B cell (primary cell): ENCODE measurements at regions of chr15 and their contacts with region 1.

Region 1: GRCh38 chr15:32844118-32844711 is 126.4 kb downstream of the GREM1 start:
- DNase-seq: peak; percentile 42
- ATAC-seq: peak; percentile 24
- H3K4me3 ChIP-seq: no peak overlapping the region
- H3K4me3 Mint-ChIP-seq: no peak overlapping the region
- H3K27ac ChIP-seq: no peak overlapping the region
- H3K27ac Mint-ChIP-seq: no peak overlapping the region
- H3K4me1 ChIP-seq: peaks cover 0 to 7% of the 10 kb centered on the region in 2 donors
- H3K4me1 Mint-ChIP-seq: peaks cover 10% of the 10 kb centered on the region
- H3K27me3 ChIP-seq: no peaks in the 10 kb centered on the region
- H3K27me3 Mint-ChIP-seq: peaks cover 14% of the 10 kb centered on the region
- CTCF ChIP-seq: peak; percentile 81

Region 2: GRCh38 chr15:32657198-32657883 is 186.9 kb before region 1 on chr15:
- CTCF ChIA-PET with region 1: interaction called, 28 read pairs
- POLR2A ChIA-PET with region 1: no interaction called
- intact Hi-C with region 1: loop called (anchors 10 kb)
- DNase-seq: no peak
- ATAC-seq: no peak
- H3K4me3 ChIP-seq: no peak overlapping the region
- H3K4me3 Mint-ChIP-seq: no peak overlapping the region
- H3K27ac ChIP-seq: no peak overlapping the region
- H3K27ac Mint-ChIP-seq: no peak overlapping the region
- H3K4me1 ChIP-seq: no peaks in the 10 kb centered on the region
- H3K4me1 Mint-ChIP-seq: peaks cover 3% of the 10 kb centered on the region
- H3K27me3 ChIP-seq: no peaks in the 10 kb centered on the region
- H3K27me3 Mint-ChIP-seq: no peaks in the 10 kb centered on the region
- CTCF ChIP-seq: no peak

Region 3: DNA sequence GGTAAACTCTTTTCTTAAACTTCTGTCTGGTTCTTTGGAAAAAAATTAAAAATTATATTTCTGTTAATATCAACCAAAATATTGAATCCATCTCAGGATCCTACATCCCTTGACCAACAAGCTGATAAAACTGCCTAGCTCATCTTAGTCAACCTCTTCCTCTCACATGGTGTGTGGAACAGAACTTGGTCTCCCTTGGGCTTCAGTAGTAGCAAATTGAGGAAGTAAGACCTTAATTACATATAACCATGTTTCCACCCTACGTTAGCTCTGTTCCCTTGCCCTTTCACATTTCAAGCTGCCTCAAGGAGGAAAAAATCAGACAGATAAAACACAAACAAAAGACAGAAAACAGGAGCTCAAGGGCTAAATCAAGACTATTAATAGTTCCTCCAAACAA is 10.1 kb before region 1 on chr15:
- CTCF ChIA-PET with region 1: interaction called, 62 read pairs
- POLR2A ChIA-PET with region 1: no interaction called
- intact Hi-C with region 1: no loop called
- DNase-seq: peak; percentile 63
- ATAC-seq: peak; percentile 99
- H3K4me3 ChIP-seq: no peak overlapping the region
- H3K4me3 Mint-ChIP-seq: peak overlapping the region; percentile 33
- H3K27ac ChIP-seq: no peak overlapping the region
- H3K27ac Mint-ChIP-seq: peak overlapping the region; percentile 12
- H3K4me1 ChIP-seq: peaks cover 10 to 13% of the 10 kb centered on the region in 2 donors
- H3K4me1 Mint-ChIP-seq: peaks cover 16% of the 10 kb centered on the region
- H3K27me3 ChIP-seq: peaks cover 0 to 3% (median 1%) of the 10 kb centered on the region in 4 experiments
- H3K27me3 Mint-ChIP-seq: peaks cover 21% of the 10 kb centered on the region
- CTCF ChIP-seq: no peak

Region 4: GRCh38 chr15:32870240-32871033 is 26.2 kb after region 1 on chr15:
- CTCF ChIA-PET with region 1: interaction called, 6 read pairs
- POLR2A ChIA-PET with region 1: no interaction called
- intact Hi-C with region 1: loop called (anchors 1 kb)
- DNase-seq: peak; percentile 67
- ATAC-seq: peak; percentile 92
- H3K4me3 ChIP-seq: no peak overlapping the region
- H3K4me3 Mint-ChIP-seq: peak overlapping the region; percentile 32
- H3K27ac ChIP-seq: no peak overlapping the region
- H3K27ac Mint-ChIP-seq: peak overlapping the region; percentile 73
- H3K4me1 ChIP-seq: peaks cover 0 to 3% of the 10 kb centered on the region in 2 donors
- H3K4me1 Mint-ChIP-seq: peaks cover 19% of the 10 kb centered on the region
- H3K27me3 ChIP-seq: no peaks in the 10 kb centered on the region
- H3K27me3 Mint-ChIP-seq: no peaks in the 10 kb centered on the region
- CTCF ChIP-seq: no peak

Region 5: DNA sequence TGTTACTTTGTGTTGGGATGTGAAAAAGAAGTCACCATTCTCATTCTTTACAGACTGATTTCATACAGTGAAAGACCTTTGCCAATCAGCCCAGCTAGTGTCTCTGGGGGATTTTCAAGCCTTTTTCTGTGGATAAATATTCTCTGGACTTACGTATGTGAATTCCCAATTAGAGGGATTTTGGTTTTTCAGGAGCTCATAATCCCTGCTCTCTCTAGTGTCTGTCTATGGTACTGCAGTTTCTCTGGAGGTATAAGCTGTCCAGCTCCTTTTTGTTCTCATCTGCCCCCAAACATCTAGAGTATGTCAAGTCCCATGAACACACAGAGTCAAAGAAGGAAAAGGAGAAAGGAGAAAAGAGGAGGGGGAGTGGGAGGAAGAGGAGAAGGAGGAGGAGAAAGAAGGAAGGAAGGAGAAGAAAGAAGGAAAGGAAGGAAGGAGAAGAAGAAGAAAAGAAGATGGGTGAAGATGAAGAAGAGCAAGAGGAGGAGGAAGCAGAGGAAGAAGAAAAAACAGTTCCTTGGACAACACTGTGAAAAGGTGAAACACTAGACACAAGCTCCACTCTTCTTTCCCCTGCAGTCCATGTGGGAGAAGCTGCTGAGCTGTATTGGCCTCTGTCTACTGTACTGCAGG is 92.2 kb after region 1 on chr15:
- CTCF ChIA-PET with region 1: interaction called, 90 read pairs
- POLR2A ChIA-PET with region 1: interaction called, 5 read pairs
- intact Hi-C with region 1: loop called (anchors 1 kb)
- DNase-seq: peak; percentile 40
- ATAC-seq: peak; percentile 43
- H3K4me3 ChIP-seq: no peak overlapping the region
- H3K4me3 Mint-ChIP-seq: no peak overlapping the region
- H3K27ac ChIP-seq: no peak overlapping the region
- H3K27ac Mint-ChIP-seq: no peak overlapping the region
- H3K4me1 ChIP-seq: no peaks in the 10 kb centered on the region
- H3K4me1 Mint-ChIP-seq: no peaks in the 10 kb centered on the region
- H3K27me3 ChIP-seq: peaks cover 0 to 8% (median 1%) of the 10 kb centered on the region in 4 experiments
- H3K27me3 Mint-ChIP-seq: peaks cover 55% of the 10 kb centered on the region
- CTCF ChIP-seq: peak; percentile 47

Region 6: DNA sequence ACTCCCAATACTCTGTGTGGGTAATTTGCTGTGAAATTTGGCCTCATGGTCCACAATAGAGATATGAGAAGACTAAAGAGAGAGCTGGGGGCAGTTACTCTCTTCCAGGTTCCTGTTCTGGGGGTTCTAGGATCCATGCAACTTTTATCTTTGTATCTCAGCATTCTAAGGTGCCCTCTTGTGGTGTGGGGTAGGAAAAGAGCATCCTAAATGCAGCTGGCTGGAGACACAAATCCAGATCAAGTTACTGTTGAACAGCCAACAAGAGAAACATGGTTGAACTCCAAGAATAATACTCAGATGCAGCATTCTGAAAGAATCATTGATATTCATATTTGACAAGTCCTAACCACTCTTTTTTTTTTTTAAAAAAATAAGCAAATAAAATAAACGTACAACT is 111.8 kb after region 1 on chr15:
- CTCF ChIA-PET with region 1: interaction called, 133 read pairs
- POLR2A ChIA-PET with region 1: no interaction called
- intact Hi-C with region 1: loop called (anchors 1 kb)
- DNase-seq: peak; percentile 52
- ATAC-seq: peak; percentile 28
- H3K4me3 ChIP-seq: no peak overlapping the region
- H3K4me3 Mint-ChIP-seq: no peak overlapping the region
- H3K27ac ChIP-seq: no peak overlapping the region
- H3K27ac Mint-ChIP-seq: no peak overlapping the region
- H3K4me1 ChIP-seq: no peaks in the 10 kb centered on the region
- H3K4me1 Mint-ChIP-seq: peaks cover 2% of the 10 kb centered on the region
- H3K27me3 ChIP-seq: peaks cover 0 to 3% (median 0%) of the 10 kb centered on the region in 4 experiments
- H3K27me3 Mint-ChIP-seq: peaks cover 24% of the 10 kb centered on the region
- CTCF ChIP-seq: peak; percentile 62

Region 7: DNA sequence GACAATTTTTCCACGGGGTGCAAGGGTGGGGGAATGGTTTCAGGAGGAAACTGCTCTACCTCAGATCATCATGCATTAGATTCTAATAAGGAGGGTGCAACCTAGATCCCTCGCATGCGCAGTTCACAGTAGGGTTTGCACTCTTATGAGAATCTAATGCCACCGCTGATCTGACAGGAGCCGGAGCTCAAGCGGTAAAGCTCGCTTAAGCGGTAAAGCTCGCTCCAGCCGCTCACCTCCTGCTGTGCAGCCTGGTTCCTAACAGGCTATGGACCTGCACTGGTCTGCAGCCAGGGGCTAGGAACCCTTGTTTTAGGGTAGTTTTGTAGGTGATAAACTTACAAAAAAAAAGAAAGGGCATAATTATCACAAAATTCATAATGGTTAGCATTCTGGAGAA is 412.7 kb after region 1 on chr15:
- CTCF ChIA-PET with region 1: no interaction called
- POLR2A ChIA-PET with region 1: no interaction called
- intact Hi-C with region 1: no loop called
- DNase-seq: no peak
- ATAC-seq: no peak
- H3K4me3 ChIP-seq: no peak overlapping the region
- H3K4me3 Mint-ChIP-seq: no peak overlapping the region
- H3K27ac ChIP-seq: no peak overlapping the region
- H3K27ac Mint-ChIP-seq: no peak overlapping the region
- H3K4me1 ChIP-seq: no peaks in the 10 kb centered on the region
- H3K4me1 Mint-ChIP-seq: no peaks in the 10 kb centered on the region
- H3K27me3 ChIP-seq: peaks cover 0 to 1% (median 0%) of the 10 kb centered on the region in 4 experiments
- H3K27me3 Mint-ChIP-seq: peaks cover 4% of the 10 kb centered on the region
- CTCF ChIP-seq: no peak

Region 8: DNA sequence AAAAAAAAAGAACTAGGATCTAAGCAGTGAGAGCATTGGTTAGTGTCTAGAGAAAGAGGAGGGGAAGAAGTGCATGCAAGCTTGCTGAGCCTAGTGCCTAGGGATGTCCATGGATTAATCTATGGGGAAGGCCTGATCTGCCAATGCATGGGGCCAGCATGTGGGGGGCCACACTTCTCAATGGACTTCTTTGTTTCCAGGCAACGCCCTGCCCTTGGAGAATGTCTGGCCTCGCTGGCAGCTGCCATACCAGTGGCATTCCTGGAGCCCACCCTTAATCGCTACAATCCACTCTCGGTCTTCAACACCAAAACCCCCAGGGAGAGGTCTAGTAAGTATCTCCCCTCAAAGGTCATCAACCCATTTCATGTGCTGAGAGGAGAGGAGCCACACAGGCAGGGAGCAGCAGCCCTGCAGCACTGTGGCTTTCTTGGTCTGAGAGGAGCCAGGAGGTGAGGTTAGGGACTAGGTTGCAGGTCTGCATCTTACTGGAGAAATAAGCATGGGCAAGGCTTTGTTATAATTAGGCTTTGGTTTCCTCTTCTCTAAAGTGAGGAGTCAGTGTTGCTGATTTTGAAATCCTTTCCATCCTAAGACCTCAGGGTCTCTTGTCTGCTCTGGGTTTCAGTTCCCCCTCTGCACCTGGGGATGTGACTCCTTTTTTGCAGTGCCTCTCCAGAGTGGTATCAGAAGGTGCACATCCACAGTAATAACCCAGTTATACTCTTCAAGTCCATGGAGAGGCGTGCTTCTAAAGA is 936.0 kb after region 1 on chr15:
- CTCF ChIA-PET with region 1: no interaction called
- POLR2A ChIA-PET with region 1: no interaction called
- intact Hi-C with region 1: no loop called
- DNase-seq: no peak
- ATAC-seq: no peak
- H3K4me3 ChIP-seq: no peak overlapping the region
- H3K4me3 Mint-ChIP-seq: no peak overlapping the region
- H3K27ac ChIP-seq: no peak overlapping the region
- H3K27ac Mint-ChIP-seq: no peak overlapping the region
- H3K4me1 ChIP-seq: no peaks in the 10 kb centered on the region
- H3K4me1 Mint-ChIP-seq: peaks cover 3% of the 10 kb centered on the region
- H3K27me3 ChIP-seq: no peaks in the 10 kb centered on the region
- H3K27me3 Mint-ChIP-seq: peaks cover 11% of the 10 kb centered on the region
- CTCF ChIP-seq: no peak